Activated T-helper 1 cell treated with anti-CD3 and anti-CD28 coated beads, Interleukin-12 subunit alpha, Interleukin-12 subunit beta, Interleukin-2, Interleukin-4 antibody, amounts not matched to agents 30 ng/mL and 10 ng/mL and 1 ng/mL, durations not matched to agents 14 hours and 24 hours and 36 hours (primary cell): ENCODE measurements at regions of chr3 and their contacts with region 1.

Region 1: GRCh38 chr3:59783468-59783988 is 733.7 kb upstream of the CFAP20DC start:
- DNase-seq: peak; percentile 31
- H3K4me3 Mint-ChIP-seq: peak overlapping the region; percentile 40
- H3K27ac Mint-ChIP-seq: peak overlapping the region; percentile 91
- H3K4me1 Mint-ChIP-seq: peaks cover 41% of the 10 kb centered on the region
- H3K27me3 Mint-ChIP-seq: no peaks in the 10 kb centered on the region

Region 2: GRCh38 chr3:59235634-59236012 is 547.9 kb before region 1 on chr3:
- intact Hi-C with region 1: loop called (anchors 1 kb)
- DNase-seq: peak; percentile 37
- H3K4me3 Mint-ChIP-seq: peak overlapping the region; percentile 58
- H3K27ac Mint-ChIP-seq: peak overlapping the region; percentile 27
- H3K4me1 Mint-ChIP-seq: peaks cover 29% of the 10 kb centered on the region
- H3K27me3 Mint-ChIP-seq: peaks cover 6% of the 10 kb centered on the region

Region 3: DNA sequence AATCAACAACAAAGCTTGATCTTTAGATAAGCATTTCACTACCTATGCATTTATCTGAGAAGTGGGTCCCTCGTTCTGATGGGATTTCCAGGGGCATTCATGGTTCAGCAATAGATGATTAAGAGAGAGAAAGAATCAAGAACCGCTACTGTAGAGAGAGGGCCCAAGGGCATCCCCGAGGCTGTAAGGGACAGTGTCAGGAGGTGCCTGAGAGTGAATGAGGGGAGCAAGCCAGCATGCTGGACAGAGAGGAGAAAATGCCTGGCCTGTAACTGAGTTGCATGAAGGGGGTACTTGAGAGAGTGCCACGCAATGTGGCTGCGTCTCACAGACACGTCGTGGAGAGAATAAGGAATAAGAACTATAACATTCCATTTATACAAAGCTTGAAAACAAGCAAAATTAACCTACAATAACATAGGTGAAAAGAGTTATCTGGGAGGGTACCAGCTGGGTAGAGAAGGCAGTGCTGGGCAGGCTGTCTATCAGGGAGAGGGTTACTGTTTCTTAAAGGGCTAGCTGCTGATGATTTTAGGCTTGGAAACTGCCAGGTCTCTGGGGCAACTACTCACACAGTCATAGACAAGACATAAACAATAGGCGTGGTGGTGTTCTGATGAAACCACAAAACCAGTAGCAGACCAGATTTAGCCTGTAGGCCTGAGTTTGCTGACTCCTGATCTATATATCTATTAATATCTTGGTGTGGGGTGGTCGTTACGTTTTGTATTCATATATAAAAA is 359.1 kb before region 1 on chr3:
- intact Hi-C with region 1: loop called (anchors 5 kb)
- DNase-seq: no peak
- H3K4me3 Mint-ChIP-seq: no peak overlapping the region
- H3K27ac Mint-ChIP-seq: peak overlapping the region; percentile 3
- H3K4me1 Mint-ChIP-seq: peaks cover 52% of the 10 kb centered on the region
- H3K27me3 Mint-ChIP-seq: no peaks in the 10 kb centered on the region

Region 4: GRCh38 chr3:59575113-59576001 is 208.2 kb before region 1 on chr3:
- intact Hi-C with region 1: loop called (anchors 10 kb)
- DNase-seq: peak; percentile 72
- H3K4me3 Mint-ChIP-seq: no peak overlapping the region
- H3K27ac Mint-ChIP-seq: peak overlapping the region; percentile 15
- H3K4me1 Mint-ChIP-seq: peaks cover 10% of the 10 kb centered on the region
- H3K27me3 Mint-ChIP-seq: no peaks in the 10 kb centered on the region

Region 5: GRCh38 chr3:59737241-59737640 is 46.3 kb before region 1 on chr3:
- intact Hi-C with region 1: no loop called
- DNase-seq: no peak
- H3K4me3 Mint-ChIP-seq: no peak overlapping the region
- H3K27ac Mint-ChIP-seq: no peak overlapping the region
- H3K4me1 Mint-ChIP-seq: peaks cover 21% of the 10 kb centered on the region
- H3K27me3 Mint-ChIP-seq: peaks cover 9% of the 10 kb centered on the region

Region 6: GRCh38 chr3:59759298-59760031 is 24.1 kb before region 1 on chr3:
- intact Hi-C with region 1: loop called (anchors 1 kb)
- DNase-seq: no peak
- H3K4me3 Mint-ChIP-seq: peak overlapping the region; percentile 32
- H3K27ac Mint-ChIP-seq: no peak overlapping the region
- H3K4me1 Mint-ChIP-seq: peaks cover 67% of the 10 kb centered on the region
- H3K27me3 Mint-ChIP-seq: no peaks in the 10 kb centered on the region

Region 7: GRCh38 chr3:59857589-59858346 is 74.2 kb after region 1 on chr3:
- intact Hi-C with region 1: loop called (anchors 5 kb)
- DNase-seq: peak; percentile 51
- H3K4me3 Mint-ChIP-seq: no peak overlapping the region
- H3K27ac Mint-ChIP-seq: peak overlapping the region; percentile 19
- H3K4me1 Mint-ChIP-seq: peaks cover 12% of the 10 kb centered on the region
- H3K27me3 Mint-ChIP-seq: no peaks in the 10 kb centered on the region

Region 8: DNA sequence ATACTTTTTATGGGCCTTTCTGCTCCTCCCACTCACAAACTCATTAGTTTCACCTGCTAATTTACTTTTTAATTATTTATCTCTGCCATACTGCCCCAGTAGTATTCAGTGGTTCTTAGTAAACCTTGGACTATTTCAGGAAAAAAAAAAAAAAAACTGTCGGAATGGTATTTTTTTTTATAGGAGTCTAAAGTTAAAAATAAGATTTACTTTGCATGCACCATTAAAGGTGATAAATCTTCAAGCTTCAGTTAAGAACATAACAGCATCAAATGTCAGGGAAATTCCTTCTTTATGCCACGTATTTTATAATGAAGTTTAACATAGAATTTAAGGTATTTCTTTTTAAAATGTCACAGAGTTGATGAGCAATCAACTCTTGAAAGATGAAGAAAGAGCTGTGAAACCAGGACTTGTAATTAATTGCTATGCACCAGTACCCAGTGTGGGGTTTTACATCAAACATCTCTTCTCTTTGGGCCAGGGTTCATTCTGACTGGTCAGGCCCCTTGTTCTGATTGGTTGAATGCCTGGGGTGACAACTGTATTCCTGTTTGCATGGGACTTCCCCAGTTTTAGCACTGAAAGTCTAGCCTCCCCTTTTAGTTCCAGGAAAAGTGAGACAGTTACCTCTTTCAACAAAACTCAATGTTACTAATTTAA is 1737.6 kb after region 1 on chr3:
- intact Hi-C with region 1: loop called (anchors 2 kb)
- DNase-seq: peak; percentile 61
- H3K4me3 Mint-ChIP-seq: peak overlapping the region; percentile 57
- H3K27ac Mint-ChIP-seq: peak overlapping the region; percentile 78
- H3K4me1 Mint-ChIP-seq: peaks cover 57% of the 10 kb centered on the region
- H3K27me3 Mint-ChIP-seq: no peaks in the 10 kb centered on the region